ENCODE measurements at regions of chr2 and their contacts with region 1.

Region 1: DNA sequence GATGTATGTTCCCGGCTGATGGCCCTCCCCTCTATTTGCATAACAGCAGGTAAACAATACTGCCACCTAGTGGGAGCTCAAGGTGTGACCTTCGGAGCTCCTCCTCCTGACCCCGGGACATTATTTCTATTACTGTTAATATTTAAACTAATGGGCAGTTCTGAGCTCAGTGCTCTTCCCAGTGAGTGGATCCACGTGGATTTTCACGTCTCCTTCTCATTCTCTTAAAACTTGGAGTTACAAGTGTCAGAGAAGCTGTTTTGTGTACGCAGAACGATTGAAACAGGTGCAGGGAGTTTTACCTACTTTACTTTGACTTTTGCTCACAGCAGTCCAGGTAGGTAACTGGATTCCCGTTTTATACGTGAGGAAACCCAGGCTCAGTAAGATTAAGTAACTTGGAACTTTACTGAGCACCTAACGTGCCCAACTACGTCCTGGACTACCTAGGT is 127.3 kb downstream of the PRKCE start:
- DNase-seq: peak; percentile 71
- H3K4me3 ChIP-seq: peak overlapping the region in 1 of 4 donors; percentile 11
- H3K27ac ChIP-seq: no peak overlapping the region
- H3K4me1 ChIP-seq: peaks cover 0 to 34% (median 6%) of the 10 kb centered on the region in 4 donors
- H3K27me3 ChIP-seq: no peaks in the 10 kb centered on the region
- CTCF ChIP-seq: peak; percentile 74 to 83 (median 81)
- EP300 ChIP-seq: no peak
- POLR2A ChIP-seq: no peak

Region 2: GRCh38 chr2:45643543-45644542 is 134.9 kb before region 1 on chr2:
- in situ Hi-C with region 1: loop called (anchors 5 to 10 kb)
- intact Hi-C with region 1: loop called (anchors 5 kb)
- DNase-seq: peak; percentile 71
- H3K4me3 ChIP-seq: peak overlapping the region; percentile 44 to 64 (median 52)
- H3K27ac ChIP-seq: peak overlapping the region in 2 of 4 donors; percentile 8 to 66
- H3K4me1 ChIP-seq: peaks cover 14 to 25% (median 19%) of the 10 kb centered on the region in 4 donors
- H3K27me3 ChIP-seq: peaks cover 14% of the 10 kb centered on the region
- CTCF ChIP-seq: peak; percentile 94 to 99 (median 98)
- EP300 ChIP-seq: no peak
- POLR2A ChIP-seq: no peak

Region 3: DNA sequence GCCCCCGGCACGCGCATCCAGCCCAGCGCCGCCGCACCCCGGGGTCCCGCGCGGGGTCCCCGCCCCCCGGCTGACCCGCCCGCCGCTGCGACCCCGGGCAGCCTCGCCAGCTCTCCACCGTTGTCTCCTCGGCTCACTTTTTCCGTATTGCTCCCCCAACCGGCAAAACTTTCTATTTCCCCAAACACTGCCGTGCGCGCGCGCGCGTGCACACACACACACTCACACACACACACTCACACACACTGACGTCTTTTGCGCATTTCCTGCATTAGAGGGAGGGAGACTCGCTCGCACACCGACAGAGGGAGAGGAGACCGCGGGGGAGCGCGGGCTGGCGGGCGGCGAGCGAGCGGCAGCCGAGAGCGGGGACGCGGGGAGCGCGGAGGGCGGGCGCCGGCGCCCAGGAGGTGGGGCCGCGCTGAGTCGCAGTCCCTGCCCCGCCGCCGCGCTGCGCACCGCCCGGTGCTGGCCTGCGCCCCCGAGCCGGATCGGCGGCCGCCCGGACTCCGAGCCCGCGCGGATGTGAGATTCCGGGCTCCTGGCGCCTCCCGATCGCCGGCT is 127.8 kb before region 1 on chr2:
- in situ Hi-C with region 1: loop called (anchors 5 to 10 kb)
- intact Hi-C with region 1: loop called (anchors 5 kb)
- DNase-seq: peak; percentile 95
- H3K4me3 ChIP-seq: peak overlapping the region; percentile 81 to 96 (median 90)
- H3K27ac ChIP-seq: peak overlapping the region; percentile 97 to 100 (median 99)
- H3K4me1 ChIP-seq: peaks cover 15 to 41% (median 29%) of the 10 kb centered on the region in 4 donors
- H3K27me3 ChIP-seq: no peaks in the 10 kb centered on the region
- CTCF ChIP-seq: peak; percentile 16 to 76 (median 39)
- EP300 ChIP-seq: peak; percentile 74
- POLR2A ChIP-seq: peak; percentile 93

Region 4: DNA sequence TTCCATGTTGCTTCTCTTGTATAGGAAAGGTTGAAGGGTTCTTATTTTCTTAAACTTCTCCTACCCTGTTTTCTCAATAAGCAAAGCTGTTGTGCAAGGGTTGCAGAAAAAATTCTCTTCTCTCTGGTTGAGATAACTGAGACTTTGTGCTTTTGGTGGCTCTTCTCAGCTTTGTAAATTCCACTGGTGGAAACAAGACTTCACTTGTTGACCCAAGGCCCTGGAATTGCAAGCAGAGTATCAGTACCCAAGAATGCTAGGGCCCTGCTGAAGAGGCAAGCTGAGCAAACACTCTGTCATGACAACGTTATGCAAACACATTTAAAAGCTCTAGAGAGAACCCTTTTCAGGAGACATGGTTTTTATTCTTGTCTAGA is 223.7 kb after region 1 on chr2:
- in situ Hi-C with region 1: no loop called
- intact Hi-C with region 1: no loop called
- DNase-seq: no peak
- H3K4me3 ChIP-seq: no peak overlapping the region
- H3K27ac ChIP-seq: peak overlapping the region; percentile 50 to 67 (median 64)
- H3K4me1 ChIP-seq: peaks cover 5 to 22% (median 10%) of the 10 kb centered on the region in 4 donors
- H3K27me3 ChIP-seq: no peaks in the 10 kb centered on the region
- CTCF ChIP-seq: no peak
- EP300 ChIP-seq: no peak
- POLR2A ChIP-seq: no peak

Region 5: DNA sequence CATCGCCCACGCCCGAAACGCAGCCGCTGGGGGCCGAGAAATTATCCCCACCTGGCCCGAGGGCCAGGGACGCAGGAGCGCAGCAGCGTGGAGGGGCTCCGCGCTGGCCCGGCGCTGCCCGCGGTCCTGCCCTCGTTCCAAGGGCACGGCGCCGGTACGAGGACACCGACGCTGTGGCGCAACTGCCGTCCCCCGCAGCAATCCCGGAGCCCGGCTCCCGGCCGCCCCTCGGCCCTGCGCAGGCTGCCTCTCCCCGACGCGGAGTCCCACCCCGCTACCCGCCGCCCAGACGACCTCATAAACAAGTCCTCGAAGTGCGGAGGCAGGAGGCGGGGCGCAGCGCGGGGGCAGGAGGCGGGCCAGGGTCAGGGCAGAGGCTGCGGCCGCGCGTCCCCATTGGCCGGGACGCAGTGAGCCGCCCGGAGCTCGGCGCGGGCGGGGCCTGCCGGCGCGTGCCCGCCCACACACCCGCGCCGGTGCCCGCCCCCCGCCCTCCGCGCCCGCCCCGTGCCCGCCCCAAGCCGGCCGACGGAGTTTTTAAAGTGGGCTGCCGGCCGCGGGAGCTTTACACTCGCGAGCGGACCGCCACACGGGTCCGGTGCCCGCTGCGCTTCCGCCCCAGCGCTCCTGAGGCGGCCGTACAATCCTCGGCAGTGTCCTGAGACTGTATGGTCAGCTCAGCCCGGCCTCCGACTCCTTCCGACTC is 518.2 kb after region 1 on chr2 and contains the start of gene EPAS1:
- in situ Hi-C with region 1: no loop called
- intact Hi-C with region 1: no loop called
- DNase-seq: peak; percentile 96
- H3K4me3 ChIP-seq: peak within 1 kb of the TSS; percentile 51 to 86 (median 71)
- H3K27ac ChIP-seq: peak within 1 kb of the TSS; percentile 88 to 92 (median 90)
- H3K4me1 ChIP-seq: peaks cover 0 to 38% (median 23%) of the 10 kb centered on the region in 4 donors
- H3K27me3 ChIP-seq: no peaks in the 10 kb centered on the region
- CTCF ChIP-seq: peak in 1 of 5 experiments; percentile 0
- EP300 ChIP-seq: no peak
- POLR2A ChIP-seq: peak; percentile 87
- total RNA-seq, gene EPAS1: 102 to 260 (median 167) TPM

Measured in transverse colon (tissue), 4 donors.